ENCODE measurements at regions of chr1 and their contacts with region 1.

Region 1: GRCh38 chr1:192808518-192809306 is at the start of gene RGS2:
- DNase-seq: peak; percentile 80 to 95 (median 87)
- ATAC-seq: peak; percentile 88
- H3K4me3 ChIP-seq: peak within 1 kb of the TSS; percentile 69 to 96
- H3K4me3 Mint-ChIP-seq: peak within 1 kb of the TSS; percentile 97
- H3K27ac ChIP-seq: peak within 1 kb of the TSS; percentile 66 to 81
- H3K27ac Mint-ChIP-seq: peak within 1 kb of the TSS; percentile 96
- H3K4me1 ChIP-seq: peaks cover 20% of the 10 kb centered on the region
- H3K4me1 Mint-ChIP-seq: peaks cover 29% of the 10 kb centered on the region
- H3K27me3 ChIP-seq: no peaks in the 10 kb centered on the region
- H3K27me3 Mint-ChIP-seq: no peaks in the 10 kb centered on the region
- CTCF ChIP-seq: no peak
- total RNA-seq, gene RGS2: 221 to 234 TPM

Region 2: GRCh38 chr1:192477630-192478029 is 331.1 kb before region 1 on chr1:
- CTCF ChIA-PET with region 1: interaction called, 4 read pairs
- POLR2A ChIA-PET with region 1: no interaction called
- intact Hi-C with region 1: loop called (anchors 2 to 5 kb)
- DNase-seq: peak in 2 of 9 experiments; percentile 52 to 65
- ATAC-seq: peak; percentile 77
- H3K4me3 ChIP-seq: no peak overlapping the region
- H3K4me3 Mint-ChIP-seq: no peak overlapping the region
- H3K27ac ChIP-seq: no peak overlapping the region
- H3K27ac Mint-ChIP-seq: no peak overlapping the region
- H3K4me1 ChIP-seq: no peaks in the 10 kb centered on the region
- H3K4me1 Mint-ChIP-seq: no peaks in the 10 kb centered on the region
- H3K27me3 ChIP-seq: peaks cover 0 to 2% of the 10 kb centered on the region in 2 experiments
- H3K27me3 Mint-ChIP-seq: no peaks in the 10 kb centered on the region
- CTCF ChIP-seq: peak; percentile 64

Region 3: DNA sequence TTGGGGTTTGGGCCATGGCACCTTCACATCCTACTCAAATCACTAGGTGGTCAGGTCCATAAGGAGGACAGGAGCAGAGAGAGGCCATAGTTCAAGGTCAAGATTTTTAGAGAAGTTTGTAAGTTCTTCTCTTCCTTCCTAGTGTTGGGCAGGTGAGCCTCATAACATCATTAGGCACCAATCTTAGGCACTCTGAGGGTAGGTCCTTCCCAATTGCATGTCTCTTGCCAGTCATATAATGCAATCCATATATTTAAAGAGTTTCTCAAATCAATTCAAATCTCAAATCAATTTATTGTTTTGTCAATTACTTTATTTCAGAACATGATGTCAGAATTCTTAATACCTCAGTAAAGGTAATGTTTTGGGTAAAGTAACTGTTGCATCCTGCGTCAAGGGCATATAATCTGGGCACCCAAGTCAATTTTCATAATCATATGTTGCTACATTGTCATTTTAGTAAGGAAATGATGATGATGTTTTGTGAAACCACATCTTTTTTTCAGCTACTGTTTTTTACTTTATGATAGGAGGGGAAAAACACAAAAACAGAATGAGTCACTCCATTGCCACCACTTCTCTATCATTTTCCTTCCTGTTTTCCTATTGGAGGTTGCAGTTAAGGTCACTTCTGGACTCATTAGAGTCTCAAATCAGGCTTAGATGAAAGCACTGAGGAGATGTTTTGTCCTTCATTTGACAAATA is 127.8 kb after region 1 on chr1:
- CTCF ChIA-PET with region 1: interaction called, 3 read pairs
- POLR2A ChIA-PET with region 1: no interaction called
- intact Hi-C with region 1: loop called in 1 of 2 experiments (anchors 2 kb)
- DNase-seq: peak in 2 of 9 experiments; percentile 24 to 45
- ATAC-seq: peak; percentile 61
- H3K4me3 ChIP-seq: no peak overlapping the region
- H3K4me3 Mint-ChIP-seq: no peak overlapping the region
- H3K27ac ChIP-seq: no peak overlapping the region
- H3K27ac Mint-ChIP-seq: peak overlapping the region; percentile 46
- H3K4me1 ChIP-seq: no peaks in the 10 kb centered on the region
- H3K4me1 Mint-ChIP-seq: peaks cover 6% of the 10 kb centered on the region
- H3K27me3 ChIP-seq: no peaks in the 10 kb centered on the region
- H3K27me3 Mint-ChIP-seq: no peaks in the 10 kb centered on the region
- CTCF ChIP-seq: no peak

Region 4: DNA sequence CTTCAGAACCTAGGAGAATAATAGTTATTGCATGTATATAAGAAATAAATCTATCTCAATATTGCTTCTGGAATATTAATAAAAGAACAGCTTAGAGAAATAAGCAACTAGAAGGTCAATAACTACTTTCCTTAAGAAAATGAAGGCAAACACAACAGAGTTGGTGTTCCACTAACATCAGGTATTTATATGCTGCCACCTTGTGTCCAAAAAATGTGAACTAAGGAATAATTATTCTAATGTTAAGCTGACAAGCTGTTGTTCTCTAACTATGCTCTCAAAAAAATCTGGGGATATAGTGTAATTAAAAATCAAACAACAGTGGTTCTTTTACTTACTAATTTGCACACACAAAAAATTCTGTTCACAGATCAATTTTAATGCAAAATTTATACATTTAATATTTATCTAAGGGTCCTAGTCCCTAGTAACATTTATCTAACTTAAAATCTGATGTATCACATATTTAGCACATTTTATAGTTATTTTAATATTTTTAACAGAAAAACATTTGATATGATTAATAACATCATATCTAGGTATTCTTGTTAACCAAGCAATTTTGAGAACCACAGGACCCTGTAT is 210.8 kb after region 1 on chr1:
- CTCF ChIA-PET with region 1: interaction called, 84 read pairs
- POLR2A ChIA-PET with region 1: interaction called, 4 read pairs
- intact Hi-C with region 1: loop called (anchors 1 to 2 kb)
- DNase-seq: peak in 2 of 9 experiments; percentile 53 to 63
- ATAC-seq: peak; percentile 57
- H3K4me3 ChIP-seq: no peak overlapping the region
- H3K4me3 Mint-ChIP-seq: no peak overlapping the region
- H3K27ac ChIP-seq: no peak overlapping the region
- H3K27ac Mint-ChIP-seq: no peak overlapping the region
- H3K4me1 ChIP-seq: no peaks in the 10 kb centered on the region
- H3K4me1 Mint-ChIP-seq: no peaks in the 10 kb centered on the region
- H3K27me3 ChIP-seq: no peaks in the 10 kb centered on the region
- H3K27me3 Mint-ChIP-seq: no peaks in the 10 kb centered on the region
- CTCF ChIP-seq: peak; percentile 48

Region 5: GRCh38 chr1:193059268-193060225 is 250.8 kb after region 1 on chr1 and contains the starts of genes RO60 and UCHL5:
- CTCF ChIA-PET with region 1: interaction called, 13 read pairs
- POLR2A ChIA-PET with region 1: interaction called, 15 read pairs
- intact Hi-C with region 1: loop called (anchors 1 to 5 kb)
- DNase-seq: peak; percentile 86 to 99 (median 93)
- ATAC-seq: peak; percentile 95
- H3K4me3 ChIP-seq: peak within 1 kb of the TSS; percentile 61 to 82
- H3K4me3 Mint-ChIP-seq: peak within 1 kb of the TSS; percentile 100
- H3K27ac ChIP-seq: peak within 1 kb of the TSS; percentile 91 to 92
- H3K27ac Mint-ChIP-seq: peak within 1 kb of the TSS; percentile 100
- H3K4me1 ChIP-seq: peaks cover 32% of the 10 kb centered on the region
- H3K4me1 Mint-ChIP-seq: peaks cover 67% of the 10 kb centered on the region
- H3K27me3 ChIP-seq: no peaks in the 10 kb centered on the region
- H3K27me3 Mint-ChIP-seq: no peaks in the 10 kb centered on the region
- CTCF ChIP-seq: no peak
- total RNA-seq, gene RO60: 51.6 to 52.8 TPM
- total RNA-seq, gene UCHL5: 11.7 to 13.1 TPM

Region 6: DNA sequence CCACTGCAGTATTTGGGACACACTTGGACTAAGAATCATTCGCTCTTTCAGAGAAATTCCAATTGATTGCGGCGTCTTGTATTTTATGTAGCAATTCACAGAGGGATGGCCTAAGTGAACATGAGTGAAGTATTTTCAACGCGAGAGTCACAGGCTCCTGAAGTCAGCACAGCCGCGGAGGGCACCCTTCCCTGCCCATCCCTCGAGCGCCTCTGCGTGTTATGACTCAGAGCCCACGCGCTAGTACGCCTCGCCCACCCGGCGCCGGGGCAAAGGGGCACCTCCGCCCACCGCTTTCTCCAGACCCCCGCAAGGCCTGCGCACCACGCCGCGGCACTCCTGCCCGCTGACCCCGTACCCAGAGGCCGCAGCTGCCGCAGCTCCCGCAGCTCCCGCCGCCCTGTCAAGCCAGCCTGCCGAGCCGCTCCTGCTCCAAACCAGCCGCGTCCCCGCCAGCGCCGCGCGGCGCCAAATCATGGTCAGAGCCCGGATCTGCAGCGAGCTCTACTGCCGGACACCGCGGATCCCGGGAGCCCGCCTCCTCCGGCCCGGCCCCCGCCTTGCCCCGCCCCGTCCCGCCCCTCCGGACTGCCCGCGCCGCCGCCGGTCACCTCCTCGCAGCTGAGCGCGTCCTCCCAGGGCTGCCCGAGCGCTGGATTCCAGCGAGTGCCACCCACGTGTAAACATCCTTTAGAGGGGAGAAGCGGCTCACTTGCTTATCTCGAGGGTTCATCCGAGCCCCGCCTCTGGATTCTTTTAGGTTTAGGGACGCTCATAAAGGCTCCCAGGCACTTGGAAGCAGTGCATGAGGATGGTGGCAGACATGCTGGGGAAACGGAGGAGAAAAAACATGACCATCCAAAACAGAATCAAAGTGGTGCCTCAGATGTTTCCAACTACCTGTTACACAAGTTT is 296.5 kb after region 1 on chr1 and contains the start of gene GLRX2:
- CTCF ChIA-PET with region 1: no interaction called
- POLR2A ChIA-PET with region 1: interaction called, 3 read pairs
- intact Hi-C with region 1: loop called in 1 of 2 experiments (anchors 5 kb)
- DNase-seq: peak; percentile 12 to 79 (median 72)
- ATAC-seq: peak; percentile 97
- H3K4me3 ChIP-seq: peak within 1 kb of the TSS; percentile 61 to 70
- H3K4me3 Mint-ChIP-seq: peak within 1 kb of the TSS; percentile 96
- H3K27ac ChIP-seq: peak within 1 kb of the TSS; percentile 33 to 38
- H3K27ac Mint-ChIP-seq: peak within 1 kb of the TSS; percentile 88
- H3K4me1 ChIP-seq: peaks cover 14% of the 10 kb centered on the region
- H3K4me1 Mint-ChIP-seq: peaks cover 24% of the 10 kb centered on the region
- H3K27me3 ChIP-seq: no peaks in the 10 kb centered on the region
- H3K27me3 Mint-ChIP-seq: no peaks in the 10 kb centered on the region
- CTCF ChIP-seq: no peak
- total RNA-seq, gene GLRX2: 3.4 to 4.2 TPM

Region 7: DNA sequence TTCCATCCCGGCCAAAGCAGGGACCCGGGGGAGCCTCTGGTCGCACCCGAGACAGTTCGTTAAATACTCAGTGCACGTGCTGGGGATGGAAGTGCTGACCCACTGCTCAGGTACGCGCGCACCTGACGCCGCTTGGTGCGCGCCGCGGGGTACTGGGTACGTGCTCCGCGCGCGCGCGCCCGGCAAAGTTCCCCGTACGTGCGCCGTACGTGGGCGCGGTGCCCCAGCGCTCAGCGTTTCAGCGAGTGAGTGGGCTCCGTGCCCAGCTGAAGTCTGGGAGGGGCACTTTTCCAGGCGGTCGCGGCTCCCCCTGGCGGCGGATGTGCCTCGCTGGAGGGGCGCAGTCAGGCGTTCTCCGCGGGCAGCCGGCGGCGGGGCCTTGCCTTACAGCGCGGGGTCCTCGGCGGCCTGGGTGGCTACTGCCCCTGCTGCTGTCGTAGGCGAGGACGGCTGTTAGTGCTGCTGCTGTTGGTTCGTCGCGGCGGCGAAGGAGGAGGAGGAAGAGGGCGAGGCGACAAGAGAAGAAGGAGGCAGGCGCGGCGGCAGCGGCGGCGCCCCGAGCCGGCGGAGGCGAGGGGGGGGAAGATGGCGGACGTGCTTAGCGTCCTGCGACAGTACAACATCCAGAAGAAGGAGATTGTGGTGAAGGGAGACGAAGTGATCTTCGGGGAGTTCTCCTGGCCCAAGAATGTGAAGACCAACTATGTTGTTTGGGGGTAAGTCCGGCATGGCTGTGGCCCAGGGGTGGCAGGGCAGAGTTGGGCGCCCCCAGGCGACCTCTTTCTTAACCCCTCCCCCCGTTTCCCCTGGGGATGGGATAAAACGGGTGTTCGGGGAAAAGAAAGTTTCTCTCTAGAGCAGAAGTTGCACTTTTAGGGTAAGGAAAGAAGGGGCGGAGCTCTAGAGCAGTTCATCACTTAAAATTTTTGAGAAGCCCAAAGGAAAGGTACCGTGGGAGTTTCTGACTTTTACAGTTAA is 313.2 kb after region 1 on chr1 and contains the start of gene CDC73:
- CTCF ChIA-PET with region 1: interaction called, 4 read pairs
- POLR2A ChIA-PET with region 1: interaction called, 4 read pairs
- intact Hi-C with region 1: loop called (anchors 1 to 2 kb)
- DNase-seq: peak; percentile 98 to 100 (median 99)
- ATAC-seq: peak; percentile 92
- H3K4me3 ChIP-seq: peak within 1 kb of the TSS; percentile 89 to 98
- H3K4me3 Mint-ChIP-seq: peak within 1 kb of the TSS; percentile 100
- H3K27ac ChIP-seq: peak within 1 kb of the TSS; percentile 94 to 96
- H3K27ac Mint-ChIP-seq: peak within 1 kb of the TSS; percentile 100
- H3K4me1 ChIP-seq: peaks cover 33% of the 10 kb centered on the region
- H3K4me1 Mint-ChIP-seq: peaks cover 55% of the 10 kb centered on the region
- H3K27me3 ChIP-seq: no peaks in the 10 kb centered on the region
- H3K27me3 Mint-ChIP-seq: no peaks in the 10 kb centered on the region
- CTCF ChIP-seq: peak; percentile 84
- total RNA-seq, gene CDC73: 73.9 to 78.8 TPM

Measured in CD8-positive, alpha-beta T cell (primary cell).